RWPE1 (cell line): ENCODE measurements at regions of chr5 and their contacts with region 1.

Region 1: GRCh38 chr5:151651997-151652645 is 34.6 kb downstream of the SPARC start:
- DNase-seq: peak; percentile 97
- H3K27ac ChIP-seq: peak overlapping the region; percentile 45
- CTCF ChIP-seq: peak; percentile 96

Region 2: DNA sequence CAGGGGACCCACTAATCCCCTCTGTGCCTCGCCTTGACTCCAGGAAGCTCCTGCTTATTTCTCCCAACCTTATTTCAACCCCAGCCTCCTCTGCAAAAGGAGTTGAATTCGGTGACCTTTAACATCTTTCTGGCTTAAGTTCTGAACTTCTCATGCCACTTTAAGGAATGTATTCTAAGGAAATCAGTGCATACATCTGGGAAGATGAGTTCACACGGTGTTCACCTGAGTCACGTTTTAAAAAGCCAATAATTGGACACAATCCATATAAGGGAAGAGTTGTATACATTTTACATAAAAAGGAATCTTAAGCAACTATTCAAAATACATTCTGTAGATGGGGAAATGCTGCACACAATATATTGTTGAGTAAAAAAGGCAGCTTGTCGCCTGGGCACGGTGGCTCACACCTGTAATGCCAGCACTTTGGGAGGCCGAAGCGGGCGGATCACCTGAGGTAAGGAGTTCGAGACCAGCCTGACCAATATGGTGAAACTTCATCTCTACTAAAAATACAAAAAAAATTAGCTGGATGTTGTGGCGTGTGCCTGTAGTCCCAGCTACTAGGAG is 94.1 kb before region 1 on chr5:
- CTCF ChIA-PET with region 1: interaction called, 15 read pairs
- POLR2A ChIA-PET with region 1: no interaction called
- DNase-seq: no peak
- H3K27ac ChIP-seq: peak overlapping the region; percentile 58
- CTCF ChIP-seq: no peak

Region 3: GRCh38 chr5:151581812-151582583 is 70.1 kb before region 1 on chr5:
- CTCF ChIA-PET with region 1: interaction called, 12 read pairs
- POLR2A ChIA-PET with region 1: interaction called, 3 read pairs
- DNase-seq: peak; percentile 90
- H3K27ac ChIP-seq: peak overlapping the region; percentile 98
- CTCF ChIP-seq: no peak

Region 4: GRCh38 chr5:151619796-151620460 is 32.2 kb before region 1 on chr5:
- CTCF ChIA-PET with region 1: interaction called, 18 read pairs
- POLR2A ChIA-PET with region 1: interaction called, 3 read pairs
- DNase-seq: peak; percentile 90
- H3K27ac ChIP-seq: peak overlapping the region; percentile 98
- CTCF ChIP-seq: no peak